MCF 10A (cell line): ENCODE measurements at regions of chr10 and their contacts with region 1.

Region 1: GRCh38 chr10:61733358-61733940 is 70.7 kb downstream of the CABCOCO1 start:
- DNase-seq: peak; percentile 59
- H3K4me3 Mint-ChIP-seq: no peak overlapping the region
- H3K27ac Mint-ChIP-seq: no peak overlapping the region
- H3K4me1 Mint-ChIP-seq: no peaks in the 10 kb centered on the region
- H3K27me3 Mint-ChIP-seq: no peaks in the 10 kb centered on the region
- CTCF ChIP-seq: peak; percentile 58

Region 2: DNA sequence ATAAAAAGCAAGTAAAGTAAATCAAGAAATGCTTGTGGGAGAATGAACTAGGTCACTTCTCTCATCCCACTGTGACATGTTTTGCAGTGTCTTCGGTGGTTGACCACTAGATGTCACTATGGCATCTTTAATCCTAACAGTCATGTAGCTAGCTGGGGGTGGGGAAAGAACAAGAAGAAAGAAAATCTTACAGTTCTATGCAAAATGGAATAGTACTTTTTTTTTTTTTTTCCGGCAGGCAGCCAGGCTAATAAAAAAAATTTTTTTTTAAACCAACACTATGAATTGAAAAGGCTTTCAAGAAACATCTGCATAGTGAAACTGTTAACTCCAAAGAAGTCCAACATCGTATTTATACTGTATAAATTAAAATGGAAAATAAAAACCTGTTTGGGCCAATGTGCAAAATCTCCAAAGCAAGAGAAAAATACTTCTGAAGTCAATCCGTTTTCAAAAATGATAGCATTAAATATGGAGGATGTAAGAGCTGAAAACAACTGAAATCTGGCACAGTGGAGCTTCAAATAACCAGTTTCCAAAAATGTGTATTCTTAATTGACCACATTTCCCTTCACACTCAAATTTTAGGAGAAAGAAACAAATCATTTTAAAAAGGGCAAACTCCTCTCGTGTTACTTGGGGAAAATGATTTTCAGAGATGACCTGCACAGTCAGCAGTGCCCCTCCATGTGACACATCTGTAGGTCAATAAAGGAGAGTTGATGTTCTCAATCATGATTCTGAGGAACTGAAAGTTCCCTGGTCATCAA is 916.6 kb before region 1 on chr10:
- CTCF ChIA-PET with region 1: interaction called, 4 read pairs
- POLR2A ChIA-PET with region 1: no interaction called
- intact Hi-C with region 1: loop called (anchors 1 kb)
- DNase-seq: peak; percentile 81
- H3K4me3 Mint-ChIP-seq: no peak overlapping the region
- H3K27ac Mint-ChIP-seq: no peak overlapping the region
- H3K4me1 Mint-ChIP-seq: no peaks in the 10 kb centered on the region
- H3K27me3 Mint-ChIP-seq: no peaks in the 10 kb centered on the region
- CTCF ChIP-seq: peak; percentile 72

Region 3: GRCh38 chr10:61140765-61141392 is 592.6 kb before region 1 on chr10:
- CTCF ChIA-PET with region 1: interaction called, 18 read pairs
- POLR2A ChIA-PET with region 1: interaction called, 3 read pairs
- intact Hi-C with region 1: loop called (anchors 1 kb)
- DNase-seq: peak; percentile 70
- H3K4me3 Mint-ChIP-seq: no peak overlapping the region
- H3K27ac Mint-ChIP-seq: no peak overlapping the region
- H3K4me1 Mint-ChIP-seq: peaks cover 11% of the 10 kb centered on the region
- H3K27me3 Mint-ChIP-seq: no peaks in the 10 kb centered on the region
- CTCF ChIP-seq: peak; percentile 62

Region 4: DNA sequence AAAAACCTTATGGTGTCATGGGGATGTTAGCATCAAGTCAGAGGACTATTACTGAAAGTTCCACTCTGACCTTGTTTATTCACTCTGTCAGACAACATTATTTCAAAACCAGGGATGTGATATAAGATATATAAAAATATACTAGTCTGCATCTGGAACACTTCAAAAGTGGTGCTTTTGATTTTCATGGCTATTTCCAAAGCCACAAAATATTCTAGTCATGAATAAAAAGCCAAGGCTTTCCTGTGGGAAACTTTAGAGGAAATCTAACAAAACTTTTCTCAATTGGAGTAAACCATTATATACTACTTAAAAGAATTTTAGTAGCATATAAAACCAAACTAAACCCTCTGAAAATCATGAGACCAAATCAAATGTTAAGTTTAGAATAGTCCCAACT is 485.4 kb before region 1 on chr10:
- CTCF ChIA-PET with region 1: no interaction called
- POLR2A ChIA-PET with region 1: no interaction called
- intact Hi-C with region 1: no loop called
- DNase-seq: no peak
- H3K4me3 Mint-ChIP-seq: no peak overlapping the region
- H3K27ac Mint-ChIP-seq: no peak overlapping the region
- H3K4me1 Mint-ChIP-seq: no peaks in the 10 kb centered on the region
- H3K27me3 Mint-ChIP-seq: peaks cover 20% of the 10 kb centered on the region
- CTCF ChIP-seq: no peak

Region 5: GRCh38 chr10:61271127-61271823 is 462.2 kb before region 1 on chr10:
- CTCF ChIA-PET with region 1: interaction called, 11 read pairs
- POLR2A ChIA-PET with region 1: no interaction called
- intact Hi-C with region 1: loop called (anchors 2 kb)
- DNase-seq: peak; percentile 47
- H3K4me3 Mint-ChIP-seq: no peak overlapping the region
- H3K27ac Mint-ChIP-seq: peak overlapping the region; percentile 39
- H3K4me1 Mint-ChIP-seq: peaks cover 10% of the 10 kb centered on the region
- H3K27me3 Mint-ChIP-seq: no peaks in the 10 kb centered on the region
- CTCF ChIP-seq: peak; percentile 27

Region 6: GRCh38 chr10:61606951-61607907 is 126.2 kb before region 1 on chr10:
- CTCF ChIA-PET with region 1: interaction called, 3 read pairs
- POLR2A ChIA-PET with region 1: interaction called, 4 read pairs
- intact Hi-C with region 1: loop called (anchors 2 kb)
- DNase-seq: peak; percentile 36
- H3K4me3 Mint-ChIP-seq: no peak overlapping the region
- H3K27ac Mint-ChIP-seq: no peak overlapping the region
- H3K4me1 Mint-ChIP-seq: peaks cover 23% of the 10 kb centered on the region
- H3K27me3 Mint-ChIP-seq: no peaks in the 10 kb centered on the region
- CTCF ChIP-seq: peak; percentile 39

Region 7: GRCh38 chr10:61835069-61835945 is 101.9 kb after region 1 on chr10:
- CTCF ChIA-PET with region 1: interaction called, 3 read pairs
- POLR2A ChIA-PET with region 1: no interaction called
- intact Hi-C with region 1: loop called (anchors 1 kb)
- DNase-seq: peak; percentile 70
- H3K4me3 Mint-ChIP-seq: no peak overlapping the region
- H3K27ac Mint-ChIP-seq: peak overlapping the region; percentile 83
- H3K4me1 Mint-ChIP-seq: peaks cover 31% of the 10 kb centered on the region
- H3K27me3 Mint-ChIP-seq: no peaks in the 10 kb centered on the region
- CTCF ChIP-seq: peak; percentile 50